ENCODE measurements at regions of chr17 and their contacts with region 1.

Region 1: DNA sequence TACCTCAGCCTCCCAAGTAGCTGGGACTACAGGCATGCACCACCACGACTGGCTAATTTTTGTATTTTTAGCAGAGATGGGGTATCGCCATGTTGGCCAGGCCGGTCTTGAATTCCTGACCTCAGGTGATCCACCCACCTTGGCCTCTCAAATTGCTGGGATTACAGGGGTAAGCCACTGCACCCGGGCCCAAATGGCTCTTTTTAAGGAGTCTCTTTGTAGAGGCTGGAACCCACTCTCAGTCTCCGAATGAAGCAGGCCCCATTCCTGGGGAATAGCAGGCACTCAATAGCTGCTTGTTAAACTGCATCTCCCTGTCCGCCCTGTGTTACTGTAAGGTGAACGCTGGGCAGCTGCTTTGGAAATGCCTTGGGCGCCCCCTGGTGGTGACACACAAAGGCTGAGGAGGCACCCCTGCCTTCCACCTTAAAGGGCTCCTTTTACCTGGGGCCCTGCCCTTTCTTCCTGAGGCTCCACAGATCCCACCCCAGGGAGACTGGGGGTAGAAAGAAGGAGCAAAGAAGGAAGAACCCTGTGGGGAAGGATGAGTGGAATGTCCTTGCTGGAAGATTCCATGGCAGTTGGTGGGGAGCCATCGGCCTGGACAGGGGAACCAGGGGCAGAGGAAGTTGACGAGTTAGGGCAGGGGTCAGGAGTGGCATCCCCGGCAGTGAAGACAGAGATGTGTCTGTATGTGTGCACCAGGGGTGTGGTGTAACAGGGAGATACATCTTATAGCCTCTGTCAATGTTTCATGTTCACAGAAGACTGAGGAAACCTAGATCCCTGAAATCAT is 6.1 kb upstream of the SP2 start:
- DNase-seq: peak; percentile 60
- H3K4me3 ChIP-seq: no peak overlapping the region
- H3K27ac ChIP-seq: no peak overlapping the region
- H3K4me1 ChIP-seq: peaks cover 5% of the 10 kb centered on the region
- H3K27me3 ChIP-seq: no peaks in the 10 kb centered on the region
- CTCF ChIP-seq: peak; percentile 85 to 89
- POLR2A ChIP-seq: no peak

Region 2: DNA sequence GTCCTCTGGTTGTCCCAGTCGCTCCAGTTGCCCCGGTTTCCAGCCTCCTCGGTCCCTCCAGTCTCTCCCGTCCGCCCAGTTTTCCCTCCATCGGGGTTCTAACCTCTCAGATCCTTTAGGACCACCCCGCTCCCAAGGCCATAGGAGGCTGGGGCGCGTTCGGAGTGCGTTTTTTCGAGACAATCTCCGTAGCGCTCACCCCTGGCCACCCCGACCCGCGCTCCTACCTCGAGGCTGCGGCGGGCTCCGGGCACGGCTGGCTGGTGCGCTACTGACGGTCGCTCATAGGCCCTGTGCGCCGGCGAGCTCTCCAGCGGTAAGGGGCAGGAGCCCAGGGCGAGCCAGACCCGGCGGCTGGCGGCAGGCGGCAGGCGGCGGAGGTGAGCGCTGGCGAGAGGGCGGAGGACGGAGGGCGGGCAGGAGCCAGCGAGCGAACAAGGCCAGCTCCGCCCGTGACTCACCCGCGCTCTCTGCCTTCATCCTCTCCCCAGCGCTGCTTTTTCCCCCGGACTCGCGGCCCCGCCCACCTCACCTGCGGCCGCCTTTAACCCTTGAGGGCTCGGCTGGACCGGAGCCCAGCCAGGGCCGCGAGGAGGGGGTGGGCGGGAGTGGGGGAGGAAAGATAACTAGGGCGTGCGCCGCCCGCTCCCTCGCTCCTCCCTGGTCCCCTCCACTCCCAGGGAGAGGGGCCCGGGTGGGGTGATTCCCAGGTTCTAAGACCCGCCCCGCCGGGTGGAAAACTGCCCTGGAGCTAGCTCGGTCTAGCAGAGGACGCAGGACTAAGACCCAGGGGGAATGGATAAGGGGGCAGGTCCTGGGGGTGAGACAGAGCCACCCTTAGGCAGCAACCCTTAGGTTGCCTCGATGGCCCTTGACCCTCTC is 39.0 kb before region 1 on chr17 and contains the start of gene SP6:
- CTCF ChIA-PET with region 1: interaction called, 367 read pairs
- POLR2A ChIA-PET with region 1: no interaction called
- dilution Hi-C with region 1: no loop called
- intact Hi-C with region 1: no loop called
- DNase-seq: peak; percentile 58
- H3K4me3 ChIP-seq: peak within 1 kb of the TSS in 1 of 3 experiments; percentile 6
- H3K27ac ChIP-seq: no peak within 1 kb of the TSS
- H3K4me1 ChIP-seq: peaks cover 16% of the 10 kb centered on the region
- H3K27me3 ChIP-seq: peaks cover 3 to 11% of the 10 kb centered on the region in 2 experiments
- CTCF ChIP-seq: peak in 1 of 2 donors; percentile 31
- POLR2A ChIP-seq: no peak
- total RNA-seq, gene SP6: 0.90 and 1.3 TPM in 2 replicates

Region 3: GRCh38 chr17:47862621-47863440 is 27.1 kb before region 1 on chr17:
- CTCF ChIA-PET with region 1: interaction called, 12 read pairs
- POLR2A ChIA-PET with region 1: no interaction called
- dilution Hi-C with region 1: no loop called
- intact Hi-C with region 1: no loop called
- DNase-seq: no peak
- H3K4me3 ChIP-seq: no peak overlapping the region
- H3K27ac ChIP-seq: no peak overlapping the region
- H3K4me1 ChIP-seq: peaks cover 8% of the 10 kb centered on the region
- H3K27me3 ChIP-seq: peaks cover 0 to 3% of the 10 kb centered on the region in 2 experiments
- CTCF ChIP-seq: no peak
- POLR2A ChIP-seq: no peak